H1 (cell line): ENCODE measurements at regions of chr10 and their contacts with region 1.

Region 1: DNA sequence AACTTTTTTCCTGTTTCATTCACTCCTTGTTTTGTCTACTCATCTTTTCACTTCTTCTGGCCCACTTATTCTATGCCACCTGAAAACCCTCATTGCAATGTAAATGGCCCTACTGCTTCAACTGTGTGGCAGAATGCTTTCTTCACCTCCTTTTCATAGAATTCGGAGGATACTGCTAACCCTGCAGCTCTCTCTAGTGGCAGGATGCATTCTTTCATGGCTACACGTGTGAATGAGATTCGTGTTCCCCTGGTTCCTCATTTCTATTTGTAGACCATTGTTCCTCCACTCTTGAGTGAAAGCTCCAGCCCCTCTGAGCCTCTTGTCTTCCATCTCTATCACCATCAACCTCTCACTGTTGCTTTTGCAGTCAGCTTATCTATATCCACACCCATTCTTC is 20.9 kb upstream of the CYP26C1 start:
- DNase-seq: no peak
- H3K4me3 ChIP-seq: no peak overlapping the region
- H3K27ac ChIP-seq: no peak overlapping the region
- H3K4me1 ChIP-seq: peaks cover 0 to 3% (median 0%) of the 10 kb centered on the region in 4 experiments; a peak in 2 of 7 replicates
- H3K27me3 ChIP-seq: no peaks in the 10 kb centered on the region
- CTCF ChIP-seq: peak in 2 of 3 experiments; percentile 75 to 82; a peak in 3 of 4 replicates
- EP300 ChIP-seq: no peak
- POLR2A ChIP-seq: no peak
- RAD21 ChIP-seq: peak; percentile 94 to 95

Region 2: DNA sequence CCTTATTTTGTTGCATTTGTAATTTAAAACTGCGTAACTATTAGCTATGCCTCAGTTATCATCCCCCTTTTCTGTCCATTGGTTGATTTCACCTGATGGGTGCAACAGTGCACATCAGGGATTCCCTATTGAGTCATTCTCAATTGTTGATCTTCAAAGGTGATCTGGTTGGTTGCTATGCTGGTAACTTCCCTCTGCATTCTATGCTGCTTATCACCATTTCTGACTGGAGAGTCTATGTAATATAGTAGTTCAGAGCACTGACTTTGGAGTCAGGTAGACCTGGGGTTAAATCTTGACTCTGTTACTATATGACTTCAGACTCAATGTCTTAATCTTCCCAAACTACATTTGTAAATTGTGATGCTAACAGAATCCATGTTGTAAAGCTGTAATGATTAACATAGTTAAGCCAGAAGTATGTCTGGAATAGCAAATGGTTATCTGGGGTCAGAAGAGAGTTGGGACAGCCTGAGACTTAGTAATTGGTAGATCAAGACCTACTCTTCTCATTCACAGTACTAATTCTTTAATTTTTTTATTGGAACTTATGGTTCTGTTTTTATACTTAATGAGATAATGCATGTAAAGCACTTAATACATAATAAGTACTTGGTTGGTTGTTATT is 153.3 kb before region 1 on chr10:
- CTCF ChIA-PET with region 1: interaction called, 18 read pairs
- POLR2A ChIA-PET with region 1: no interaction called
- DNase-seq: no peak
- H3K4me3 ChIP-seq: no peak overlapping the region
- H3K27ac ChIP-seq: no peak overlapping the region
- H3K4me1 ChIP-seq: no peaks in the 10 kb centered on the region; a peak in 1 of 7 replicates
- H3K27me3 ChIP-seq: no peaks in the 10 kb centered on the region
- CTCF ChIP-seq: no peak
- EP300 ChIP-seq: no peak
- POLR2A ChIP-seq: no peak
- RAD21 ChIP-seq: no peak

Region 3: GRCh38 chr10:92965314-92965713 is 74.4 kb before region 1 on chr10:
- CTCF ChIA-PET with region 1: interaction called, 15 read pairs
- POLR2A ChIA-PET with region 1: no interaction called
- DNase-seq: no peak
- H3K4me3 ChIP-seq: no peak overlapping the region
- H3K27ac ChIP-seq: no peak overlapping the region
- H3K4me1 ChIP-seq: no peaks in the 10 kb centered on the region
- H3K27me3 ChIP-seq: no peaks in the 10 kb centered on the region
- CTCF ChIP-seq: peak in 2 of 3 experiments; percentile 27 to 29; a peak in 2 of 4 replicates
- EP300 ChIP-seq: no peak
- POLR2A ChIP-seq: no peak
- RAD21 ChIP-seq: peak in 1 of 2 experiments; percentile 38; a peak in 2 of 4 replicates

Region 4: GRCh38 chr10:93006435-93007039 is 33.2 kb before region 1 on chr10:
- CTCF ChIA-PET with region 1: interaction called, 16 read pairs
- POLR2A ChIA-PET with region 1: no interaction called
- DNase-seq: no peak
- H3K4me3 ChIP-seq: no peak overlapping the region
- H3K27ac ChIP-seq: no peak overlapping the region
- H3K4me1 ChIP-seq: no peaks in the 10 kb centered on the region
- H3K27me3 ChIP-seq: no peaks in the 10 kb centered on the region
- CTCF ChIP-seq: peak in 2 of 3 experiments; percentile 70 to 74; a peak in 3 of 4 replicates
- EP300 ChIP-seq: no peak
- POLR2A ChIP-seq: no peak
- RAD21 ChIP-seq: peak; percentile 79 to 82

Region 5: GRCh38 chr10:93068411-93069244 is 28.9 kb after region 1 on chr10:
- CTCF ChIA-PET with region 1: interaction called, 12 read pairs
- POLR2A ChIA-PET with region 1: no interaction called
- DNase-seq: peak in 1 of 2 experiments; percentile 82
- H3K4me3 ChIP-seq: peak overlapping the region; percentile 29 to 52 (median 38)
- H3K27ac ChIP-seq: no peak overlapping the region
- H3K4me1 ChIP-seq: peaks cover 0 to 32% (median 22%) of the 10 kb centered on the region in 4 experiments; a peak in 6 of 7 replicates
- H3K27me3 ChIP-seq: peaks cover 96 to 100% (median 99%) of the 10 kb centered on the region in 4 experiments
- CTCF ChIP-seq: peak in 2 of 3 experiments; percentile 17 to 39; a peak in 3 of 4 replicates
- EP300 ChIP-seq: no peak
- POLR2A ChIP-seq: no peak
- RAD21 ChIP-seq: peak in 1 of 2 experiments; percentile 28; a peak in 1 of 4 replicates